ENCODE measurements at regions of chr1 and their contacts with region 1.

Region 1: GRCh38 chr1:31705080-31705866 is 1.5 kb upstream of the COL16A1 start:
- DNase-seq: peak; percentile 69

Region 2: GRCh38 chr1:31663622-31664452 is 41.4 kb before region 1 on chr1:
- CTCF ChIA-PET with region 1: interaction called, 14 read pairs
- POLR2A ChIA-PET with region 1: no interaction called
- DNase-seq: peak; percentile 95

Region 3: DNA sequence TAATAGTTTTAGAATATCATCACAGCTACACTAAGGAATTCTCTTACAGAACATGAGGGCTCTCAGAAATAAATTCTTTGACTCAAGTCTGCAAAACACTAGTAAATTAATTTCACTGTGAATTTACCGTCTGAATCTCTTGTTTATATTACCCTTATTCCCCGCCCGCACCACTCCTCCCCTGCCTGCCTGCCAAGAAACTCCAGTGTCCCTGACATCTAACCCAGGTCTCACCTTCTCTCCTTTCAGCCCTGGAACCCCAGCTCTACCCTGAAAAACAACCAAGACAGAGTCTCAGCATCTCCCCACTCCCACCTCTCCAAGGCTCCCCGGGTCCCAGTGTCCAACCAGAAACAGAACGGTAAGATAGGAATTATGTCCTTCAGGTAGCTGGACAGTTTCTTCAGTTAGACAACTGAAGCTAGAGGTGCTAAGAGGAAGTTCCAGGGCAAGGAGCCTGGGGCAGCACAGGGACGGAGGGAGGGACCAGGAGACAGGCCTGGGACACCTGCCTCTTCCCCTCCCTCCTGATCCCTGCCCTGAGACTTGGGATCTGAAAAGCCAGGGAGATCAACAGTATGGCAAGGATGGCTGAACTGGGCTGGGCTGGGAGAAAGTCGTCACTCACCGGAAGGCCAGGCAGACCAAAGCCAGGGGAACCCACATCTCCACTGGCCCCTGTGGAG is 16.9 kb before region 1 on chr1:
- CTCF ChIA-PET with region 1: no interaction called
- POLR2A ChIA-PET with region 1: no interaction called
- DNase-seq: no peak